Activated naive CD4-positive, alpha-beta T cell treated with anti-CD3 and anti-CD28 coated beads, Interleukin-2, amount 10 ng/mL, durations not matched to agents 7 days and 5 days (primary cell): ENCODE measurements at regions of chr7 and their contacts with region 1.

Region 1: DNA sequence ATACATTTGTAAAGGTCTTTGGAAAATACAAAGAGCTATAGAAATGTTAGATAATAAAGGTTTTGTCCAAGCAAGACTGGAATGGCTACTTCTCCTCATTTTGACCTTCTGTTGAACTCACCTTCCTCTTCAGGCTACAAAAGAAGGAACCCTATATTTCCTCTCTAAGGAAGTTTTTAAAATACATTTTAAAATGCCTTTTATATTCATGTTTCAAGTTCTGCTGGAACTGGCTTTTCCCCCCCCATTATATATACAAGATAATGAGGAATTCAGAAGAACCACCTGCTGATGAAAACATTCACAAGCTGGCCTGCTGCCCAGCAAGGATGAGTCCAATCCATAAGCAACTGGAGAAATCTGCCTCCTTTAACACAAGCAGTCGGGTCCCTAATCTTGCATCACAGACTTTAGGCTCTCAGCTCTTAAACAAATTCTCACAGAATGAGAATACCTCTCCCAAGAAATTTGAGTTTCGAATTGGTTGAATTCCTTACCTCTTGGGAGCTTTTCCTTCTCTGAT is 44.6 kb downstream of the MTERF1 start:
- DNase-seq: no peak
- H3K4me3 Mint-ChIP-seq: no peak overlapping the region
- H3K27ac Mint-ChIP-seq: no peak overlapping the region
- H3K4me1 Mint-ChIP-seq: no peaks in the 10 kb centered on the region
- H3K27me3 Mint-ChIP-seq: no peaks in the 10 kb centered on the region

Region 2: GRCh38 chr7:91880413-91881241 is 44.7 kb after region 1 on chr7 and contains the start of gene MTERF1:
- CTCF ChIA-PET with region 1: interaction called, 11 read pairs
- DNase-seq: peak; percentile 95
- H3K4me3 Mint-ChIP-seq: peak within 1 kb of the TSS; percentile 98
- H3K27ac Mint-ChIP-seq: peak within 1 kb of the TSS; percentile 94
- H3K4me1 Mint-ChIP-seq: peaks cover 41% of the 10 kb centered on the region
- H3K27me3 Mint-ChIP-seq: peaks cover 3% of the 10 kb centered on the region

Region 3: GRCh38 chr7:91918356-91918755 is 82.4 kb after region 1 on chr7:
- CTCF ChIA-PET with region 1: no interaction called
- DNase-seq: no peak
- H3K4me3 Mint-ChIP-seq: no peak overlapping the region
- H3K27ac Mint-ChIP-seq: no peak overlapping the region
- H3K4me1 Mint-ChIP-seq: peaks cover 5% of the 10 kb centered on the region
- H3K27me3 Mint-ChIP-seq: peaks cover 9% of the 10 kb centered on the region